Heart right ventricle (tissue), 16 donors: ENCODE measurements at regions of chr17 and their contacts with region 1.

Region 1: DNA sequence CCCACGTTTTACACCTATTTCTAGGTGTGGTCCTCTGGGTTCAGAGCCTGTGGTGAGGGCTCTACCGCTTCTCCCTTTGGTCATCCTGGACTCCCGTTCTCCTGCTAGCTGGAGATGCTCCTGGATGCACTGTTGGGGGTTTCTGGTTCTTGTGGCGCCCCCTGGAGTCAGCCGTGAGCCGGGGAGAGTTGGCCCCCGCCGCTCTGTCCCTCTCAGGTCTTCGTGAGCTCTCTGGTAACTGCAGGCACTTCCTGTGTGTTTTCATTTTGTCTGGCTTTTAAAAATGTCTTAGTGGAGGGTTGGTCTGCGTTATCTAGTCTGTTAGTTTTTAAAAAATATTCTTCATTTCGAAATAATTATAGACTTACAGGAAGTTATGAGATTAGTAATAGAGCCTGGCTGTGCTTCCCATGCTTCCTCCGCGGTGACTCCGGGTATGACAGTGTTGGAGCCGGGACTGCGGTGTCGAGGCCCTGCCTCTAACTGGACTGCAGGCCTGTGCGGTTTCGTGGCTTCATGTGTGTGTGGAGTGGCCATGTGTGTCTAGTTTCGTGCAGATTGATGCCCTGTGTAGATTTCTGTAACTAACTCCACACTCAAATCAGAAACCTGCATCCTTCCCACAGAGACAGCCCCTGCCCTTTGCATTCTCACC is 78.0 kb upstream of the ZNF750 start:
- DNase-seq: no peak
- ATAC-seq: peak in 3 of 8 donors; percentile 30 to 39 (median 36)
- H3K4me3 ChIP-seq: no peak overlapping the region
- H3K27ac ChIP-seq: peak overlapping the region in 1 of 10 donors; percentile 31
- H3K4me1 ChIP-seq: peaks cover 0 to 24% (median 6%) of the 10 kb centered on the region in 9 donors
- H3K27me3 ChIP-seq: no peaks in the 10 kb centered on the region
- CTCF ChIP-seq: peak in 8 of 9 donors; percentile 13 to 59 (median 50)

Region 2: DNA sequence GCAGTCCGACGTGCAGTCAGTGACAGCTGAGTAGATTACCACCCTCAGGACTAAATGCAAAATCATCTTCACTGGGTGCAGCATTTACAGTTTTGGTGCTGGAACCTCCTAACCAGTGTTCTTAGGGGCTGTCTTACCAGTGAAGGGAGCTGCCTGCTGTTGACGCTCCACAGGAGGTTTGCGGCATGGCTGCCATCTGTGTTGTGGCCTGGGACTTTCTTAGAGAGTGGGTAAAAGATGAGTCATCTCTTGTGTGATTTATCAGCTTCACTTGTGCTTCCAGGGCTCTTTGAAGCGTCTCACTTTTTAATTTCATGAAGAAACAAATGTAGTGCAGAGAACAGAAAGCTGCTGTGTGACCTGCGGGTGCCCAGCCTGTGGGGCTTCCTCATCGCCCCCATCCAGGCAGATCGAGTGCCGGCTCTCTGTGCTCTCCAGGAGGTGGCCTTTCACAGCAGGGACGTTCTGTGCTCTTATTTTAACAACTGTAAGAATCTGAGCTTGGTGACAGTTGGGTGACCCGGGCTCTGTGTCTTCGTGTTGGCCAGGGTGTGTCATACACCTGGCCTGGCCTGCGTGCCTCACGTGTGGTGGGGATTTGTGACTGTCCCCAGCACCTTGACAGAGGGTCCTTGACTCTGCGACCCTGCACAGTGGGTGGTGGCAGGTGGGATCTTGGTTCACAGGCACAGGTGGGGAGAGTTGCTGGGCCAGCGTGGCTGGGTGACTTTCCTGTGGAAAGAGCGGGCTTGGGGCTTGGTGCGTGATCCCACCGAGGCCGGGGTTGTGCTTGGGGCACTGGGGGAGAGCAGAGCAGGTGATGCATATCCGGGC is 53.7 kb before region 1 on chr17:
- intact Hi-C with region 1: loop called in 1 of 10 experiments (anchors 10 kb)
- DNase-seq: no peak
- ATAC-seq: no peak
- H3K4me3 ChIP-seq: peak overlapping the region in 1 of 10 donors; percentile 2
- H3K27ac ChIP-seq: peak overlapping the region in 4 of 10 donors; percentile 5 to 80 (median 32)
- H3K4me1 ChIP-seq: peaks cover 12 to 73% (median 46%) of the 10 kb centered on the region in 9 donors
- H3K27me3 ChIP-seq: no peaks in the 10 kb centered on the region
- CTCF ChIP-seq: no peak

Region 3: GRCh38 chr17:82876602-82877379 is 41.0 kb before region 1 on chr17:
- intact Hi-C with region 1: loop called in 2 of 10 experiments (anchors 5 kb)
- DNase-seq: peak; percentile 77 to 82
- ATAC-seq: peak; percentile 89 to 96 (median 95)
- H3K4me3 ChIP-seq: no peak overlapping the region
- H3K27ac ChIP-seq: peak overlapping the region; percentile 21 to 77 (median 62)
- H3K4me1 ChIP-seq: peaks cover 14 to 79% (median 44%) of the 10 kb centered on the region in 9 donors
- H3K27me3 ChIP-seq: no peaks in the 10 kb centered on the region
- CTCF ChIP-seq: peak; percentile 13 to 75 (median 54)

Region 4: GRCh38 chr17:83133302-83134100 is 215.7 kb after region 1 on chr17:
- intact Hi-C with region 1: no loop called
- DNase-seq: no peak
- ATAC-seq: peak in 4 of 8 donors; percentile 36 to 64 (median 44)
- H3K4me3 ChIP-seq: no peak overlapping the region
- H3K27ac ChIP-seq: no peak overlapping the region
- H3K4me1 ChIP-seq: peaks cover 0 to 7% (median 0%) of the 10 kb centered on the region in 9 donors
- H3K27me3 ChIP-seq: peaks cover 0 to 16% (median 0%) of the 10 kb centered on the region in 7 donors
- CTCF ChIP-seq: no peak